Activated T-helper 1 cell treated with anti-CD3 and anti-CD28 coated beads, Interleukin-12 subunit alpha, Interleukin-12 subunit beta, Interleukin-2, Interleukin-4 antibody, amounts not matched to agents 30 ng/mL and 10 ng/mL and 1 ng/mL, durations not matched to agents 14 hours and 24 hours and 36 hours (primary cell): ENCODE measurements at regions of chr1 and their contacts with region 1.

Region 1: GRCh38 chr1:101060992-101061391 is 35.4 kb upstream of the DPH5 start:
- DNase-seq: no peak
- H3K4me3 Mint-ChIP-seq: no peak overlapping the region
- H3K27ac Mint-ChIP-seq: no peak overlapping the region
- H3K4me1 Mint-ChIP-seq: peaks cover 19% of the 10 kb centered on the region
- H3K27me3 Mint-ChIP-seq: no peaks in the 10 kb centered on the region

Region 2: DNA sequence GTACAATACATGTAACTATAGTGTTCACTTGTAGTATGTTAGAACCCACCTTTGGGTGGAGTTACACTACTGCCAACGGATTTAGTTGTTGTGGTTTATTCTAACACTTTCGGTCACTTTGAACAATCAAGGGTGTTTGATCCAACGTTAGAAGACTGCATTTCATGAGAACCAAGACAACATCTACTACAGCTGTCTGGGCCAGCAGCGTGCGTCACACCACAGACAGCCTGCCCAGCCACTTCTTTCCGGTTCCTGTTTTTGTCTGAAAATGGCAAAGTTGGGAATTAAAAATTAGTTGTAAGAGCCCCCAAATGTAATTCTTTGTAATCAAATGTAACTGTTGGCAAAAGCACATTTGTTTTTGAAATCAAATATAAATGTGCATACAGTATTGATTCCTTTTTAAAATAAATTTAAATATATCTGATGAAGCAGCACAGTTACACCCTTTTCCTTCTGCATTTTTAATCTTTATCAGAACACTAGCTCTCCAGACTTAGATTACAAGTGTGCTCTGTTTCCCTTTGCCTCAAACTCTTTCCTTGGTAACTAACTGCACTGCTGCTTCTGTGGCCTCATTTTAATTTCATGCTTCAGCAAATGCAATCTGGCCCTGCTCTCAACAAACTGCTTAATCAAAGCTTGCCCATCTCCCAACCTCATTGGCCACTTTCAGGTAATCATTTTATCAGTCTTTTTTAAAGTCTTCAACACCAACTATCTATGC is 51.2 kb after region 1 on chr1:
- intact Hi-C with region 1: loop called (anchors 10 kb)
- DNase-seq: peak; percentile 59
- H3K4me3 Mint-ChIP-seq: peak overlapping the region; percentile 47
- H3K27ac Mint-ChIP-seq: peak overlapping the region; percentile 77
- H3K4me1 Mint-ChIP-seq: peaks cover 40% of the 10 kb centered on the region
- H3K27me3 Mint-ChIP-seq: no peaks in the 10 kb centered on the region